Tibial artery (tissue), 4 donors: ENCODE measurements at regions of chr19 and their contacts with region 1.

Region 1: DNA sequence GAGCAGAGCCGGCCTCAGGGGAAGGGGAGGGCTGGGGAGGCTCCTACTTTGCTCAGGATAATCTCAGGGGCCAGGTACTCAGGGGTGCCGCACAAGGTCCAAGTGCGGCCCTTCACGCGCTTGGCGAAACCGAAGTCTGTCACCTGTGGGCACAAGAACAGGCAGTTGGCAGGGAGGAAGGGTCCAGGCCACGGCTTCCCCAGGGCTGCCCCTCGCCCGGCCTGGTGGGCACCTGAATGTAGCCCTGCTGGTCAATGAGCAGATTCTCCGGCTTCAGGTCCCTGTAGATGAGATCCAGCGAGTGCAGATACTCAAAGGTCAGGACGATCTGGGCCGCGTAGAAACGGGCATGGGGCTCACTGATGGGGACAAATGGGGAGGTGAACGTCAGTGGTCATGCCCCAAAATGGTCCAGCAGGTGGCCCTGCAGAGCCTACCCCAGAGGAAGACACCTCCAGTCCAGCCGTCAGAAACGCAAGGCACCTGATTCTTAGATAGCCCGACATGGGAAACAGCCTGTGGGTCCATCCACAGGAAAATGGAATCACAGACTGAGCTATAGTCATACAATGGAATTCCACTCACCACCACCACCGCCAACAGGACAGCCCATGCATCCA is 7.1 kb upstream of the SAMD1 start:
- DNase-seq: no peak
- H3K4me3 ChIP-seq: no peak overlapping the region
- H3K27ac ChIP-seq: no peak overlapping the region
- H3K4me1 ChIP-seq: no peaks in the 10 kb centered on the region
- H3K27me3 ChIP-seq: no peaks in the 10 kb centered on the region
- CTCF ChIP-seq: peak in 1 of 2 experiments; percentile 6

Region 2: GRCh38 chr19:14110650-14111049 is 13.0 kb after region 1 on chr19:
- intact Hi-C with region 1: loop called (anchors 1 kb)
- DNase-seq: no peak
- H3K4me3 ChIP-seq: no peak overlapping the region
- H3K27ac ChIP-seq: peak overlapping the region in 1 of 2 donors; percentile 29
- H3K4me1 ChIP-seq: peaks cover 5 to 97% (median 62%) of the 10 kb centered on the region in 4 donors
- H3K27me3 ChIP-seq: no peaks in the 10 kb centered on the region
- CTCF ChIP-seq: no peak